ENCODE measurements at regions of chr3 and their contacts with region 1.

Region 1: GRCh38 chr3:55485211-55485791 is 1.8 kb downstream of the WNT5A start:
- H3K4me3 Mint-ChIP-seq: peak overlapping the region; percentile 88
- H3K27ac Mint-ChIP-seq: peak overlapping the region; percentile 84
- H3K4me1 Mint-ChIP-seq: peaks cover 73% of the 10 kb centered on the region
- H3K27me3 Mint-ChIP-seq: peaks cover 67% of the 10 kb centered on the region

Region 2: DNA sequence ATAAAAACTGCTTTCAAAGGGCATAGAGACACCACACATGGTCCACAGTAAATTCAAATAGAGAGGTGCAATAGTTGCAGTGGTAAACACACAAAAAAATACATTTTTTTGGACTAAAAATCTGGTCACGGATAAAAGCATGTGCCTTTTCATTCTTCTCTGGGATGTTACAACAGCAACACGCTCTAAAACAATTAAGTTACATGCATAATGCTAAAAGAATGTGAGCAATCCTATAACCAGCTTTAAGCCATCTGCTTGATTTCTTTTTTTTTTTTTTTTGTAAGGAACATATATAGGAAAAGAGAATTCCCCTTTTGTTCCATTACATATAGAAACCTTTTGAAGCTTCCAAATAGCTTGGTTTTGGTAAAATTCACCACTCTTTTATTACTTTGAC is 18.2 kb before region 1 on chr3:
- intact Hi-C with region 1: no loop called
- H3K4me3 Mint-ChIP-seq: no peak overlapping the region
- H3K27ac Mint-ChIP-seq: no peak overlapping the region
- H3K4me1 Mint-ChIP-seq: no peaks in the 10 kb centered on the region
- H3K27me3 Mint-ChIP-seq: no peaks in the 10 kb centered on the region

Region 3: DNA sequence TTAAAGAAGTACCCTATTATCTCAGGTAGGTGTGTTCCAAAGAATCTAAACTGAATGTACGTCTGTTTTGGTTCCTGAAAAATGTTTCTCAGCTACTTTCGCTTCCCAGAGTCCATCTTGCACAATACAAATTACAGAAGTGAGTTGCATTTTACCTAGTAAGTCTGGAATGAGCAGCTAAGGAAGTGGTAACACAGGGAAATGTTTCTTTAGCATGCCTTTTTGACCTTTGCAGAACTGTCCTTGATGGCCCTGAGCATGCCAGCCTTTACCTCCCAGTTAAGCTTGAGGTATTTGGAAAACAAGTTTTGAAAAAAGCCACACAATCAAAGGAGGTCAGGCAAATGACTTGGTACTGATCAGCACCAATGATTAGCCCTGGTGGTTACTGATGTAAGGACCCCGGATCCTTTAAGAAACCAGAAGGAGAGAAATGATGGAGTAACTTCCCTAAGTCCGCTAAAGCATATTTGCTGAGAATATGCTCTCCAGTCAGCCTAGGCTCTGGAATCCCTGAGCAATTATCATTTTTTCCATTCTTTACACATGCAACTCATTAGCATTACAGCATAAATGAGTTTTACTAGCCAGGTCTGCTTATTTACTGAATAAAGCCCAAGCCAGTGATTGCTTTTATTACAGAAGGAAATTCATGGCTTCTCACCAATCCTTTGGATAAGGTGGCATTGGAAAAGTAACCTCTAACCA is 140.8 kb after region 1 on chr3:
- intact Hi-C with region 1: loop called (anchors 2 kb)
- H3K4me3 Mint-ChIP-seq: no peak overlapping the region
- H3K27ac Mint-ChIP-seq: peak overlapping the region; percentile 67
- H3K4me1 Mint-ChIP-seq: peaks cover 78% of the 10 kb centered on the region
- H3K27me3 Mint-ChIP-seq: no peaks in the 10 kb centered on the region

Region 4: GRCh38 chr3:55721716-55722484 is 236.6 kb after region 1 on chr3:
- intact Hi-C with region 1: loop called (anchors 2 kb)
- H3K4me3 Mint-ChIP-seq: no peak overlapping the region
- H3K27ac Mint-ChIP-seq: no peak overlapping the region
- H3K4me1 Mint-ChIP-seq: no peaks in the 10 kb centered on the region
- H3K27me3 Mint-ChIP-seq: peaks cover 28% of the 10 kb centered on the region

Region 5: DNA sequence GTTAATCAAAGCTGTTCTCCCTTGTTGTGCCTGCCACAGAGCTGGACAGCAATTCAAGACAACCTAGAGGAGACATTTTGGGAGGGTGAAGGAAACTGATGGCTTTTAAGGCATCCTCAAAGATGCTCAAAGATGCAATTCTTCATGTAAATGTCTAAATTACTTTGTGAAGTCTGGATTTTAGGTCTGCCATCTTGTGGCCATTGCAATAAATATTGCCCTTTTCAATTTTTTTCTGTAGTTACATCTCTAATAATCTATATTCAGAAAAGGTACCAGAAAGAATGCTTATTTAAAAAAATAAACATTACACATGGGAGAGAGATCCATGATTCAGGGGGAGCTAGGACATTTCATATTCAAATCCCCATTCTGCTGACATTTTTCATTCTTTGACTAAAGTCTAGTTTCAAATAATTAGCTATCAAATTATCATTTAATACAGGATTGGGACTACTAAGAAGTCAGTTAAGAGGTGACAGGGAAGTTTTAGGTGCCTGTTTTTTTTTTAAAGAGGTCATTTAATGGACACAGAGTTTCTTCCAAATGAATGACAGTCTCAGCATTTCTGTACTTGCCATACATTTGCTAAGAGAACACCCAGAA is 261.6 kb after region 1 on chr3:
- intact Hi-C with region 1: loop called (anchors 1 kb)
- H3K4me3 Mint-ChIP-seq: no peak overlapping the region
- H3K27ac Mint-ChIP-seq: no peak overlapping the region
- H3K4me1 Mint-ChIP-seq: no peaks in the 10 kb centered on the region
- H3K27me3 Mint-ChIP-seq: peaks cover 8% of the 10 kb centered on the region

Region 6: DNA sequence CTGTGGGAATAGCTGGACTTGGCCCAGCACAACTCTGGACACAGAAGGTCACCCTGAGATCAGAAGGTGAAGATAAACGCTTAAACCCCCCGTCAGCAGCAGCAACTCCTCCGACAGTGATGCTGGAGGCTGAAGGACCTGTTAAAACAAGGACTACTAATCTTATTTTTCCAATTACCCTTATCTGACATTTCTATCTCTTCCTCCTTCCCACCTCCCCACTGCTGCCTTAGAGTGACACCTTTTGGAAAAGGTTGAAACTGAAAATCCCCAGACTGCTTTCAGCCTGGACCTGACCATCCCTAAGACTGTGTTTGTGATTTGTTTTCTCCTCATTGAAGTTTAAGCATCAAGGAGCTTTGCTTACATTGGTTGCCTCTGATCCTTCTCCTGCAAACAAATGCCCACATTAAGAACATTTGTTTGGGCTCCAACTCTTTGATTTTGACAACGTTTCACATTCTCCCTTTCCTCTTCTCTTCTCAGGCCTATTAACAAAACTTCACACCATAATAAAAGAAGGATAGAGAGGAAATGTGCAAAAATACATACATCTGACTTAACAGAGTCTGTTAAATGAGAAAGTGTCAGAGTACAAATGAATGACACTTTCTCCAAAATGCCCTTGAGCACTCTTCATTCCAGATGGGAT is 412.4 kb after region 1 on chr3:
- intact Hi-C with region 1: loop called (anchors 10 kb)
- H3K4me3 Mint-ChIP-seq: no peak overlapping the region
- H3K27ac Mint-ChIP-seq: no peak overlapping the region
- H3K4me1 Mint-ChIP-seq: no peaks in the 10 kb centered on the region
- H3K27me3 Mint-ChIP-seq: no peaks in the 10 kb centered on the region

Region 7: DNA sequence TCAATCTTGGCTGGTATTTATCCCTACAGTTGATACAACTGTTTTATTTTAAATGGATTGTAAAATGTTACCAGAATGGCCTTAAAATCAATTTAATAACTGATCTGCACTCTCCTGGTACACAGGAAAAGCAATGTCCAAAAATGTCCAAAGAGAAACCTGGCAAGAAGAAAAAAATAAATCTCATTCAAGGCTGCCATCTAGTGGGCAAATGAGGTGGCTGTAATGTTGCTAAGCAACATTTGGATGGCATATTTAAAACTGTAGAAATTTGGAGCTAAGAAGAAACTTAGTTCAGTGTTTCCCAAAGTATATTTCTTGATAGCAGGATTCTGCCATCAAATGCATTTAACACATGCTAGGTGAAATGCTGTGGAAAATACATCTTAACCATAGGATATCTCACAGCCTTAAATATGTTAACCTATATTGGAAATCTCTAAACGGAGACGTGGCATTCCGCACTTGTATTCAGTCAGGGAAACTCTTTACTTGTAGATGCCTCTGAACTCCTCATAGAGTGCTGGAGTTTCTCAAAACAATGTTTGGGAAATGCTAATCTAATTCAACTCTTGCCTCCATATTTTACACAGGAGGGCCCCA is 766.1 kb after region 1 on chr3:
- intact Hi-C with region 1: loop called (anchors 2 kb)
- H3K4me3 Mint-ChIP-seq: no peak overlapping the region
- H3K27ac Mint-ChIP-seq: no peak overlapping the region
- H3K4me1 Mint-ChIP-seq: no peaks in the 10 kb centered on the region
- H3K27me3 Mint-ChIP-seq: peaks cover 4% of the 10 kb centered on the region

Measured in dendritic cell treated with granulocyte-macrophage colony-stimulating factor and Interleukin-4, amounts not matched to agents 40 ng/mL and 50 ng/mL, for 4 days (primary cell).